Heart left ventricle (tissue), 16 donors: ENCODE measurements at regions of chr17 and their contacts with region 1.

Region 1: DNA sequence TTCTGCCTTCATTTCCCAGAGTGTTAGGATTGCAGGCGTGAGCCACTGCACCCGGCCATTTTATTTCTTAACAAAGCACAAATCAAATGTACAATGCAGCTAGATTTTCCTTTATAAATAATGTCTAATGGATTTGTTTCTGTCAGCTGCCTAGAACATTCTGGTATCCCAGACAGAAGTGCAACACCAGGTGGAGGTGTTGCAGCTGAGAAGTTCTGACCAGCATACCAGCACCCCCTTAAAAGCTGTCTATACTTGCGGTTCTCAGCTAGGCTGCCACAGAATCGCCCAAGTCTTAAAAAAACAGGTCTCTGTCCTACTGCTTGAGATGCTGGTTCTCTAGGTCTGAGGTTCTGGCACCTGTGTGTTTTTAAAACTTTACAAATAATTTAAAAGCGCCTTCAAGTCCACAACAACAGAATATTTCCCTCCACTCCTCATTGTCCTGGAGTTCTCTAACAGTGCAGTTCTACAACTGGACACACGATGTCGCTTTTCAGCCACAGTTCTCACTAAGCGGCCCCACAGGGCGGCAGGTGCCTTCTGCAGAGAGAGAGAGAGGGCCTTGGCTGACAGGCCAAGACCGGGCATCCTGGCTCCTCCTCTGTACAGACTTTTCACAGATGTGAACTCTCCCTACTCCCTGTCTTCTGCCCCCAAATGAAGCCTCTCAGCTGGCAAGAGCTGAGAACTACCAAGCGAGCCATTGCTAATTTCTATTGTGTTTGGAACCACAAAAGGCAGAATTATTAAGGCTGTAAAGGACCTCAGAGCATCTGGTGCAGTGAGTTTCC is 32.6 kb upstream of the MEOX1 start:
- DNase-seq: peak; percentile 73 to 84 (median 76)
- ATAC-seq: peak; percentile 49 to 86 (median 83)
- H3K4me3 ChIP-seq: no peak overlapping the region
- H3K27ac ChIP-seq: no peak overlapping the region
- H3K4me1 ChIP-seq: peaks cover 0 to 19% (median 14%) of the 10 kb centered on the region in 12 donors
- H3K27me3 ChIP-seq: peaks cover 0 to 3% (median 0%) of the 10 kb centered on the region in 9 donors
- CTCF ChIP-seq: peak; percentile 90 to 98 (median 95)
- POLR2A ChIP-seq: no peak

Region 2: DNA sequence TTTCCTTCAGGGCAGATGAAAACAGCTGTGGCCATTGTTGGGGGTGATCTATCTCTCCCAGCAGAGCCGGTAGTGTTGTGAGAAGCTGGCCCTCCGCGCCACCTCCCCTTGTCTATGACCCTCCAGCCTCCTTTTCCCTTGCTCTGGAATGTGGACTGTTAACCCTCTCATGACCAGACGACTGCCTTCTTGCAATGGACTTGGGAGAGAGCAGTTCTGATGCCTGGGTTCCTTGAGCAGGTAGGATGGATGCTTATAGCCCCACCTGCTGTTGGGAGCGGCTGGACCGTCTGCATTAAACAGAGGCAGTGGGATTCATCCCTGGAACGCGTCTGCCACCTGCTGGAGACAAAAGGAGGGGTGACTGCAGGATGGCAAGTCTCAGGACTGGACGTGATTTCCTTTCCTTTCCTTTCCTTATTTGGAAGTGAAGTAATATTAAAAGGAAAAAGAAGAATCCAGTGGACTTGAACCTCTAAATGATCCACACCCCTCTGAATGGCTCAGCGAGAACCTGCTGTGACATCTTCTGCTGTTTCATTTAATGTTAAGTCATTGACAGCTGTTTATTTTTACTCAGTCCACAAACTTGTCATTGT is 66.1 kb after region 1 on chr17:
- intact Hi-C with region 1: loop called (anchors 1 to 2 kb)
- DNase-seq: peak; percentile 91 to 95 (median 92)
- ATAC-seq: peak; percentile 67 to 92 (median 84)
- H3K4me3 ChIP-seq: no peak overlapping the region
- H3K27ac ChIP-seq: no peak overlapping the region
- H3K4me1 ChIP-seq: peaks cover 0 to 22% (median 4%) of the 10 kb centered on the region in 12 donors
- H3K27me3 ChIP-seq: peaks cover 0 to 31% (median 10%) of the 10 kb centered on the region in 9 donors
- CTCF ChIP-seq: peak; percentile 94 to 100 (median 99)
- POLR2A ChIP-seq: no peak

Region 3: DNA sequence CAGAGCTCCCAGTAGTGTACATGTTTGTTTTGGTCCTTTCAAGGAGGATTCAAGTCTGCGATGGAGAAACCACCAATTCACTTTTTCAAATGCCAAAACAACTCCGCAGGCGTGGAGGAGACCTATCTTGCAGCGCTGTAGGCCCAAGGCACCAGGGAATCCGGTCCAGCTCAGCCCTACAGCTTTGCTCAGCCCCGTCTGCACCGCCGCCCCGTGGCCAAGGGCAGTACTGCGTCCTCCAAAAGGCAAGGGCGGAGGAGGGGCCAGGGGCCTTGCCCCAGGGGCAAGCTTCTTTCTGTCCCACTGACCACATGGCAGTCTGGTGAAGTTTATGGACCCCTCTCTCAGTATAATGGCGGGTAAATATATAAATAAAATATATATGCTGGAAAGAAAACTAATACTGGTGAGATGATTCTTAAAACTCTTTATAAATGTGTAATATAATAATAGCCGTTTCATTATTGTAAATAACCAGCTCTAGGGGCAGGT is 152.0 kb after region 1 on chr17:
- intact Hi-C with region 1: loop called in 7 of 10 experiments (anchors 2 to 10 kb)
- DNase-seq: peak; percentile 85 to 93 (median 88)
- ATAC-seq: peak; percentile 90 to 96 (median 94)
- H3K4me3 ChIP-seq: peak overlapping the region in 6 of 12 donors; percentile 39 to 57 (median 50)
- H3K27ac ChIP-seq: peak overlapping the region; percentile 13 to 81 (median 71)
- H3K4me1 ChIP-seq: peaks cover 0 to 18% (median 8%) of the 10 kb centered on the region in 12 donors
- H3K27me3 ChIP-seq: no peaks in the 10 kb centered on the region
- CTCF ChIP-seq: peak; percentile 95 to 99 (median 98)
- POLR2A ChIP-seq: no peak